B cell (primary cell): ENCODE measurements at regions of chr7 and their contacts with region 1.

Region 1: DNA sequence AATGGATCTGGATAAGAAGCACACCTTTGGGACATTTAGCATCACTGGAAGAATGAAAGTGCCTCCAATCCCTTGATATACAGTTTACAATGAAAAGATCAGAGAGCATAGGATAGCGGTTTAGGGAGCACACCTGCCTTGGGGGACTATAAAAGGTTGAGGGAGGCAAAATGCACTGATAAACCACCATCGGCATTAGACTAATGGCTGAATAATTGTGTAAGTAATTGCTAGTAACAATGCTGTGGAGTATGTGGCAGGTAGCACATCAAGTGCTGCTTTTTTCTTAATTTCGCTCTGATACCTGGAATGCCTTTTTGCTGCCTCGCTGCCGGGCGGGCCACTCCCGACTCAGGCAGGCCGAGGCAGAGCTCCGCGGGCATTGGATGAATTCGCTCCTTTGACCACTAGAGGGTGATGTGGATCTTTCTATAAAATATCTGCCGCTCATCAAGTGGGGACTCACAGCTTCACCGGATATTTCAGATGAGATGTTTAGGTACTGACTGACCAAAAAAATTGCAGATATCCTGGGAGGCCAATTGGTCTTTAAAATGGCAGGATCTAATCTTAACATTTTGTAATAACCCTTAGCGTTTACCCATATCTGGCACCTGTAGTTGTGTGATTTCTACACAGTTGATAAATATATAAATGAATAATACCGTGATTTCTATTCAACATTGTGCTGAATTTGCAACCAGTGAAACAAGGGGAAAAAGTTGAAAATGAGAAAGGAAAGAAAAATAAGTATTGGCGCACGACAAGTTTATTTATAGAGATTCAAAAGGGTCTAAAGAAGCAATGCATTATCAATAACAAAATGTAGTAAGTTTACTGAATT is 116.8 kb upstream of the PRSS1 start:
- DNase-seq: peak; percentile 85
- ATAC-seq: peak; percentile 97
- H3K4me3 ChIP-seq: no peak overlapping the region
- H3K4me3 Mint-ChIP-seq: no peak overlapping the region
- H3K27ac ChIP-seq: no peak overlapping the region
- H3K27ac Mint-ChIP-seq: no peak overlapping the region
- H3K4me1 ChIP-seq: no peaks in the 10 kb centered on the region
- H3K4me1 Mint-ChIP-seq: peaks cover 3% of the 10 kb centered on the region
- H3K27me3 ChIP-seq: peaks cover 0 to 5% (median 2%) of the 10 kb centered on the region in 4 experiments
- H3K27me3 Mint-ChIP-seq: peaks cover 30% of the 10 kb centered on the region
- CTCF ChIP-seq: peak; percentile 85

Region 2: DNA sequence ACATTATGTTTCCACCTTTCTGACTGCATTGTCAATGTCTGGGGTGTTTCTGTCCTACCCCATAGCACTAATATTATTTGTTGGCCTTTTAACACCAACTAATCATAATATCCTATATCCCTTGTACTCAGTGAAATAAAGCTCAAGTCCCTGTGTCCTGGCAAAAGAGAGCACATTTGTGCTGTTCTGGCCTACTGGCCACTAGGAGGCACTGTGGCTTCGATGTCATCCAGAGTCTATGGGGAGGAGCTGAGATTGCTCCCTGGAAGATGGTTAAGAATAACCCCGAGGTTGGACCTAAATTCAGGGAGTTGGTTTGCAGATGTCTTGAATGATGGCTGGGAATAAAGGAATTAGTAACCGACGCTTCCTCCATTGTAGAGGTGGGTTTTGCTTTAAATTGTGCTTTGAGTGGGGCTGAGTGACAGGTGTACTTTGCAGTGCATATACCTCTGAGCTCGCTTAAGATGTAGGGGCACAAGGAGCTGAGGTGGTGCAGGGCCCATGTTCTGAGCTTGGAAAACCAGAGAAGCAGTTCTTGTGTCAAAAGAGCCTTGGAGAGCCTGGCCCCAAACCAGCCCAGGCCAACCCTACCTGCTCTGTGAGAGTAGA is 74.4 kb before region 1 on chr7:
- CTCF ChIA-PET with region 1: no interaction called
- POLR2A ChIA-PET with region 1: no interaction called
- intact Hi-C with region 1: no loop called
- DNase-seq: peak; percentile 46
- ATAC-seq: no peak
- H3K4me3 ChIP-seq: no peak overlapping the region
- H3K4me3 Mint-ChIP-seq: no peak overlapping the region
- H3K27ac ChIP-seq: no peak overlapping the region
- H3K27ac Mint-ChIP-seq: no peak overlapping the region
- H3K4me1 ChIP-seq: no peaks in the 10 kb centered on the region
- H3K4me1 Mint-ChIP-seq: no peaks in the 10 kb centered on the region
- H3K27me3 ChIP-seq: peaks cover 0 to 31% (median 14%) of the 10 kb centered on the region in 4 experiments
- H3K27me3 Mint-ChIP-seq: peaks cover 50% of the 10 kb centered on the region
- CTCF ChIP-seq: peak; percentile 79

Region 3: DNA sequence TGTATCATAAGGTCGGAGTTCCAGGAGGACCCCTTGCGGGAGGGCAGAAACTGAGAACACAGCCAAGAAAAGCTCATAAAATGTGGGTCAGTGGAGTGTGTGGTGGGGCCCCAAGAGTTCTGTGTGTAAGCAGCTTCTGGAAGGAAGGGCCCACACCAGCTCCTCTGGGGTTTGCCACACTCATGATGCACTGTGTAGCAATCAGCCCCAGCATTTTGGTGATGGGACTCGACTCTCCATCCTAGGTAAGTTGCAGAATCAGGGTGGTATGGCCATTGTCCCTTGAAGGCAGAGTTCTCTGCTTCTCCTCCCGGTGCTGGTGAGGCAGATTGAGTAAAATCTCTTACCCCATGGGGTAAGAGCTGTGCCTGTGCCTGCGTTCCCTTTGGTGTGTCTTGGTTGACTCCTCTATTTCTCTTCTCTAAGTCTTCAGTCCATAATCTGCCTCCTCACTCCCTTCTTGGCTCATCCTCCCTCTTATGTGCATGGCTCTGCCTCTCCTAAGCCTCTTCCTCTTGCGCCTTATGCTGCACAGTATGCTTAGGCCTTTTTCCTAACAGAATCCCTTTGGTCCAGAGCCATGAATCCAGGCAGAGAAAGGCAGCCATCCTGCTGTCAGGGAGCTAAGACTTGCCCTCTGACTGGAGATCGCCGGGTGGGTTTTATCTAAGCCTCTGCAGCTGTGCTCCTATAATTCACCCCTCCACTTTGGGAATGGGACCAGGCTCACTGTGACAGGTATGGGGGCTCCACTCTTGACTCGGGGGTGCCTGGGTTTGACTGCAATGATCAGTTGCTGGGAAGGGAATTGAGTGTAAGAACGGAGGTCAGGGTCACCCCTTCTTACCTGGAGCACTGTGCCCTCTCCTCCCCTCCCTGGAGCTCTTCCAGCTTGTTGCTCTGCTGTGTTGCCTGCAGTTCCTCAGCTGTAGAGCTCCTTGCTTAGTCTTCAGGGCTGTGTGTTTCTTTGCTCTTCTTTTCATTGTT is 156.1 kb after region 1 on chr7:
- CTCF ChIA-PET with region 1: interaction called, 119 read pairs
- POLR2A ChIA-PET with region 1: interaction called, 17 read pairs
- intact Hi-C with region 1: loop called (anchors 1 kb)
- DNase-seq: no peak
- ATAC-seq: no peak
- H3K4me3 ChIP-seq: no peak overlapping the region
- H3K4me3 Mint-ChIP-seq: no peak overlapping the region
- H3K27ac ChIP-seq: no peak overlapping the region
- H3K27ac Mint-ChIP-seq: peak overlapping the region; percentile 83
- H3K4me1 ChIP-seq: peaks cover 35 to 49% of the 10 kb centered on the region in 2 donors
- H3K4me1 Mint-ChIP-seq: peaks cover 61% of the 10 kb centered on the region
- H3K27me3 ChIP-seq: no peaks in the 10 kb centered on the region
- H3K27me3 Mint-ChIP-seq: no peaks in the 10 kb centered on the region
- CTCF ChIP-seq: no peak

Region 4: GRCh38 chr7:142833174-142834048 is 200.9 kb after region 1 on chr7:
- CTCF ChIA-PET with region 1: interaction called, 19 read pairs
- POLR2A ChIA-PET with region 1: no interaction called
- intact Hi-C with region 1: no loop called
- DNase-seq: no peak
- ATAC-seq: no peak
- H3K4me3 ChIP-seq: no peak overlapping the region
- H3K4me3 Mint-ChIP-seq: no peak overlapping the region
- H3K27ac ChIP-seq: no peak overlapping the region
- H3K27ac Mint-ChIP-seq: no peak overlapping the region
- H3K4me1 ChIP-seq: peaks cover 0 to 11% of the 10 kb centered on the region in 2 donors
- H3K4me1 Mint-ChIP-seq: peaks cover 28% of the 10 kb centered on the region
- H3K27me3 ChIP-seq: no peaks in the 10 kb centered on the region
- H3K27me3 Mint-ChIP-seq: no peaks in the 10 kb centered on the region
- CTCF ChIP-seq: no peak

Region 5: GRCh38 chr7:142866361-142867058 is 234.0 kb after region 1 on chr7:
- CTCF ChIA-PET with region 1: interaction called, 29 read pairs
- POLR2A ChIA-PET with region 1: interaction called, 5 read pairs
- intact Hi-C with region 1: no loop called
- DNase-seq: peak; percentile 29
- ATAC-seq: no peak
- H3K4me3 ChIP-seq: no peak overlapping the region
- H3K4me3 Mint-ChIP-seq: no peak overlapping the region
- H3K27ac ChIP-seq: no peak overlapping the region
- H3K27ac Mint-ChIP-seq: no peak overlapping the region
- H3K4me1 ChIP-seq: no peaks in the 10 kb centered on the region
- H3K4me1 Mint-ChIP-seq: peaks cover 3% of the 10 kb centered on the region
- H3K27me3 ChIP-seq: no peaks in the 10 kb centered on the region
- H3K27me3 Mint-ChIP-seq: no peaks in the 10 kb centered on the region
- CTCF ChIP-seq: peak; percentile 24

Region 6: DNA sequence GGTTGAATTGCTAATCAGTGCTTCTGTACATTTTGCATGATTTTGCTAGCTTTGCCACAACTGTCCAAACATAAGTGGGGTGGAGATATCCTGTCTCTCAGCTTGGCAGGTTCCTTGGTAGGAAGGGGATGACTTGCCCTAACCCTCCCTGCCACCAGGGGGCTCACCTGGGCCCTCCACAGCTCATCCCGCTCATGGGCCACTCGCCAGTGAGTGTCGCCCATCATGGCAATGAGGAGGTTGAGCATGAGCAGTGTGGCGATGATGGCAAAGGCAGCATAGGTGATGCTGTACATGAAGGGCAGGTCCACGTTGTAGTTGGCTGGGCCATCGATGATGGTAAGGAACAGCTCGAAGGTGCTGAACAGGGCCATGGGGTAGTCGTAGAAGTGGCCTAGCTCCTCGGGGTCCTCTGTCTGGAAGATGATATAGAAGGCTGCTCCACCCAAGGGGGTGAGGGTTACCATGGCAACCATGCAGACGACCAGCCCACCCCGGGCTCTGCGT is 240.8 kb after region 1 on chr7:
- CTCF ChIA-PET with region 1: interaction called, 18 read pairs
- POLR2A ChIA-PET with region 1: no interaction called
- intact Hi-C with region 1: no loop called
- DNase-seq: peak; percentile 32
- ATAC-seq: peak; percentile 41
- H3K4me3 ChIP-seq: no peak overlapping the region
- H3K4me3 Mint-ChIP-seq: no peak overlapping the region
- H3K27ac ChIP-seq: no peak overlapping the region
- H3K27ac Mint-ChIP-seq: no peak overlapping the region
- H3K4me1 ChIP-seq: no peaks in the 10 kb centered on the region
- H3K4me1 Mint-ChIP-seq: no peaks in the 10 kb centered on the region
- H3K27me3 ChIP-seq: peaks cover 0 to 5% (median 0%) of the 10 kb centered on the region in 4 experiments
- H3K27me3 Mint-ChIP-seq: peaks cover 6% of the 10 kb centered on the region
- CTCF ChIP-seq: peak; percentile 53

Region 7: DNA sequence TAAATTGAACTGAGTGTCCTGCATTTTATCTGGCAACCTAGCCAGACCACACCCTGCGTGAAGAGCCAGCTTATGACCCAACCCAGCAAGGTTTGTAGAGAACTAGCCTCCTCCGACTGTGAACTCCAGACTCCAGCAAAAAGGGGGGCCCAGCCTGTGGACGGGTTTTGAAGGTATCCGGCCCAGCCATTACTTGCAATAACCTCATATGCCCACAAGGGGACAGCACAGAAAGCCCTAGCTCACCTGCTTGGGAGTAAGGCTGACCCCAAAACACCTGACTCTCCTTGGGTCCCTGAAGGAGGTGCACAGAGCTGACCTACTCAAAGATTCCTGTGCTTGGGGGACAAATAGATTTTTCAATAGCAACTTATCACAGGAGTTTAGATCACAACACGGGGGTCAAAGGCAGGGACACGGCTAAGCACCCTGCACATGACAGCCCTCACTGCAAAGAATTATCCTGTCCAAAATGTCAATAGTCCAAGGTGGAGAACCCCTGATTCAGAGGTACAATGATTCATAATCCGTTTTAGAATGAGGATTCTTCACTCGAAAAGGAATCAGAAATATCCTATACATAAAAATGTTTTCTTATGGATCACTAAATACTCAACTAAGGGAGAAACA is 248.5 kb after region 1 on chr7:
- CTCF ChIA-PET with region 1: interaction called, 18 read pairs
- POLR2A ChIA-PET with region 1: no interaction called
- intact Hi-C with region 1: loop called (anchors 2 kb)
- DNase-seq: peak; percentile 70
- ATAC-seq: peak; percentile 81
- H3K4me3 ChIP-seq: no peak overlapping the region
- H3K4me3 Mint-ChIP-seq: no peak overlapping the region
- H3K27ac ChIP-seq: no peak overlapping the region
- H3K27ac Mint-ChIP-seq: no peak overlapping the region
- H3K4me1 ChIP-seq: no peaks in the 10 kb centered on the region
- H3K4me1 Mint-ChIP-seq: no peaks in the 10 kb centered on the region
- H3K27me3 ChIP-seq: peaks cover 0 to 8% (median 1%) of the 10 kb centered on the region in 4 experiments
- H3K27me3 Mint-ChIP-seq: peaks cover 13% of the 10 kb centered on the region
- CTCF ChIP-seq: peak; percentile 92

Region 8: GRCh38 chr7:142968229-142968628 is 335.7 kb after region 1 on chr7:
- CTCF ChIA-PET with region 1: no interaction called
- POLR2A ChIA-PET with region 1: no interaction called
- intact Hi-C with region 1: no loop called
- DNase-seq: no peak
- ATAC-seq: no peak
- H3K4me3 ChIP-seq: no peak overlapping the region
- H3K4me3 Mint-ChIP-seq: no peak overlapping the region
- H3K27ac ChIP-seq: no peak overlapping the region
- H3K27ac Mint-ChIP-seq: no peak overlapping the region
- H3K4me1 ChIP-seq: no peaks in the 10 kb centered on the region
- H3K4me1 Mint-ChIP-seq: no peaks in the 10 kb centered on the region
- H3K27me3 ChIP-seq: peaks cover 0 to 21% (median 13%) of the 10 kb centered on the region in 4 experiments
- H3K27me3 Mint-ChIP-seq: peaks cover 49% of the 10 kb centered on the region
- CTCF ChIP-seq: no peak